H1 (cell line): ENCODE measurements at regions of chr16 and their contacts with region 1.

Region 1: GRCh38 chr16:73196670-73197069 is 148.7 kb upstream of the ZFHX3 start:
- DNase-seq: peak; percentile 51 to 74
- H3K4me3 ChIP-seq: no peak overlapping the region
- H3K27ac ChIP-seq: no peak overlapping the region
- H3K4me1 ChIP-seq: no peaks in the 10 kb centered on the region; a peak in 1 of 7 replicates
- H3K27me3 ChIP-seq: peaks cover 0 to 6% (median 0%) of the 10 kb centered on the region in 4 experiments; a peak in 2 of 7 replicates
- CTCF ChIP-seq: peak; percentile 79 to 92 (median 84)
- EP300 ChIP-seq: no peak
- POLR2A ChIP-seq: no peak
- RAD21 ChIP-seq: peak; percentile 95 to 97

Region 2: GRCh38 chr16:73122604-73123391 is 73.9 kb before region 1 on chr16:
- CTCF ChIA-PET with region 1: no interaction called
- POLR2A ChIA-PET with region 1: no interaction called
- DNase-seq: no peak
- H3K4me3 ChIP-seq: no peak overlapping the region
- H3K27ac ChIP-seq: no peak overlapping the region
- H3K4me1 ChIP-seq: no peaks in the 10 kb centered on the region
- H3K27me3 ChIP-seq: no peaks in the 10 kb centered on the region
- CTCF ChIP-seq: no peak
- EP300 ChIP-seq: no peak
- POLR2A ChIP-seq: no peak
- RAD21 ChIP-seq: no peak

Region 3: GRCh38 chr16:73176577-73177013 is 20.1 kb before region 1 on chr16:
- CTCF ChIA-PET with region 1: interaction called, 14 read pairs
- POLR2A ChIA-PET with region 1: no interaction called
- DNase-seq: no peak
- H3K4me3 ChIP-seq: no peak overlapping the region
- H3K27ac ChIP-seq: no peak overlapping the region
- H3K4me1 ChIP-seq: peaks cover 7 to 14% (median 8%) of the 10 kb centered on the region in 4 experiments
- H3K27me3 ChIP-seq: no peaks in the 10 kb centered on the region
- CTCF ChIP-seq: peak in 2 of 3 experiments; percentile 15 to 38; a peak in 1 of 4 replicates
- EP300 ChIP-seq: no peak
- POLR2A ChIP-seq: no peak
- RAD21 ChIP-seq: peak in 1 of 2 experiments; percentile 32; a peak in 2 of 4 replicates

Region 4: GRCh38 chr16:73185737-73186136 is 10.9 kb before region 1 on chr16:
- CTCF ChIA-PET with region 1: interaction called, 14 read pairs
- POLR2A ChIA-PET with region 1: no interaction called
- DNase-seq: no peak
- H3K4me3 ChIP-seq: no peak overlapping the region
- H3K27ac ChIP-seq: no peak overlapping the region
- H3K4me1 ChIP-seq: no peaks in the 10 kb centered on the region
- H3K27me3 ChIP-seq: no peaks in the 10 kb centered on the region
- CTCF ChIP-seq: no peak
- EP300 ChIP-seq: no peak
- POLR2A ChIP-seq: no peak
- RAD21 ChIP-seq: no peak